CD8-positive, alpha-beta T cell (primary cell): ENCODE measurements at regions of chr14 and their contacts with region 1.

Region 1: GRCh38 chr14:87992718-87993628 is at the start of gene GALC:
- DNase-seq: peak; percentile 91 to 98 (median 95)
- ATAC-seq: peak; percentile 81
- H3K4me3 ChIP-seq: peak within 1 kb of the TSS; percentile 59 to 72
- H3K4me3 Mint-ChIP-seq: peak within 1 kb of the TSS; percentile 90
- H3K27ac ChIP-seq: peak within 1 kb of the TSS; percentile 83 to 96
- H3K27ac Mint-ChIP-seq: peak within 1 kb of the TSS; percentile 98
- H3K4me1 ChIP-seq: peaks cover 42% of the 10 kb centered on the region
- H3K4me1 Mint-ChIP-seq: peaks cover 73% of the 10 kb centered on the region
- H3K27me3 ChIP-seq: no peaks in the 10 kb centered on the region
- H3K27me3 Mint-ChIP-seq: no peaks in the 10 kb centered on the region
- CTCF ChIP-seq: peak; percentile 6
- total RNA-seq, gene GALC: 14.9 to 16.3 TPM

Region 2: DNA sequence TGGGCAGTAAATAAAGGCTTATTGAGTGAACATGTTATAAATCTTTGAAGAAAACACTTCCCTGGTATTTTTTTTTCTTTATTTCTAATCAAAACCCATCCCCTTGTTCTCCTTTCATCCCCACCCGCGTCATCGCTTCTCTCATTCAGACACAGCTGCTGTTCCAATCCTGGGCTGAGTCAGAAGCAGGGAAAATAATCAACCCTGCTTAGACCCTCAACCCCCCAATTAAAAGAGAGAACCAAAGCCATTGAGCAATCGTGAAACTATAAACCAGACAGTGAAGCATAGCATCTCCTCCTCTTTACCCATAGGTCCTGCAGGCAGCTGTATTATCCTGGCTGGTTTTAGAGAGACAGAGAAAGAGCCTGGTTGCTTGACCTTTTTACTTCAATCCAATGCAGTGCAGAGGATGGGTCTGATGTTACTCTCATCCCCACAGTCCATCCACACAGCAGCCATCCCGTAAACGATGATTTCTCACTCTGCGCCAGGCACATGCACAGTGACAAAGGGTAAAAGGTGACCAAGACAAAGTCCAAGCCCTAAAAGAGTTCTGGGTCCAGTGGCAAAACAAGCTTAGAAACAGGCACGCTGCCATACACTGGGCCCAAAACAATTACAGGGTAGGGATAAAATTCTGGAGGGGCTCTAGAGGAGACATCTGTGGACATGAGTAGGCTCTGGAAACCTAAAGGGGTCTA is 238.3 kb before region 1 on chr14:
- CTCF ChIA-PET with region 1: no interaction called
- POLR2A ChIA-PET with region 1: no interaction called
- intact Hi-C with region 1: no loop called
- DNase-seq: no peak
- ATAC-seq: no peak
- H3K4me3 ChIP-seq: no peak overlapping the region
- H3K4me3 Mint-ChIP-seq: no peak overlapping the region
- H3K27ac ChIP-seq: no peak overlapping the region
- H3K27ac Mint-ChIP-seq: no peak overlapping the region
- H3K4me1 ChIP-seq: no peaks in the 10 kb centered on the region
- H3K4me1 Mint-ChIP-seq: no peaks in the 10 kb centered on the region
- H3K27me3 ChIP-seq: no peaks in the 10 kb centered on the region
- H3K27me3 Mint-ChIP-seq: peaks cover 7% of the 10 kb centered on the region
- CTCF ChIP-seq: no peak

Region 3: DNA sequence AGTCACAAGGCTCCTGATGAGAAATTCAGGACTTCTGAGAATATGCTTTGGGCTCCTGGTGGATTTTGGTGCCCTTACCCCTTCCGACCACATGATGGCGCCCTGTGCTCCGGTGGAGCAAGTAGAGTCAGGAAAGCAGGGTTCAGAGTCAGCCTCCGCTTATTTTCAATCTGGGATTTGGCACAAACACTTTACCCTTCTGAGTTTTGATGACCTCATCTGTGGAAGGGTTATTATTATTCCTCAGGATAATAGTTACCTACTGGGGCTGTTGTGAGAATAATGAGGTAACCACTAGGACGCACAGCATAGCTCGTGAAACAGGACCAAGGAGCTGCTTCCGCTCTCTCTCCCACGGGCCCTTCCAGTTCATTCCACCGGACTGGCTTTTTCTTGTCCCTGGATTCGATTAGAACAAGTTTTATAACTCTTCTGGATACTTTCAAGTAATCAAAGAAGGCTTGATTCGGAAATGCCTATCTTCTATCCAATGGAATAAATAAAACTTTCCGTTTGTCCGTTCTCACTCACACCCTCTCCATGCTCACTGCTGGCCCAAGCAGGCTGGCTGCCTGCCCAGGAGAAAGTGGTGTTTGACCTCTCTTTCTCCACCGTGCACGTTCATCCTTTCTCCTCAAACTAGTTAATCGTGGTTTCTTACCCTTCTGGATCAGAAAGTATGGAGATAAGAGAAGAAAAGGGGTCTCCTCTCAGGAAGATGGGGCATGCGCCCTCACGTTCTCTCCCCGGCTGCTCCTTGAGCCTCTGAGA is 104.6 kb before region 1 on chr14:
- CTCF ChIA-PET with region 1: no interaction called
- POLR2A ChIA-PET with region 1: no interaction called
- intact Hi-C with region 1: no loop called
- DNase-seq: peak in 2 of 9 experiments; percentile 9 to 14
- ATAC-seq: no peak
- H3K4me3 ChIP-seq: no peak overlapping the region
- H3K4me3 Mint-ChIP-seq: no peak overlapping the region
- H3K27ac ChIP-seq: no peak overlapping the region
- H3K27ac Mint-ChIP-seq: no peak overlapping the region
- H3K4me1 ChIP-seq: no peaks in the 10 kb centered on the region
- H3K4me1 Mint-ChIP-seq: no peaks in the 10 kb centered on the region
- H3K27me3 ChIP-seq: no peaks in the 10 kb centered on the region
- H3K27me3 Mint-ChIP-seq: peaks cover 7% of the 10 kb centered on the region
- CTCF ChIP-seq: no peak

Region 4: GRCh38 chr14:87952307-87953094 is 40.5 kb before region 1 on chr14:
- CTCF ChIA-PET with region 1: interaction called, 4 read pairs
- POLR2A ChIA-PET with region 1: interaction called, 7 read pairs
- intact Hi-C with region 1: loop called in 1 of 2 experiments (anchors 5 kb)
- DNase-seq: peak in 2 of 9 experiments; percentile 40 to 63
- ATAC-seq: peak; percentile 54
- H3K4me3 ChIP-seq: peak overlapping the region in 1 of 2 experiments; percentile 9
- H3K4me3 Mint-ChIP-seq: peak overlapping the region; percentile 69
- H3K27ac ChIP-seq: peak overlapping the region; percentile 49 to 73
- H3K27ac Mint-ChIP-seq: peak overlapping the region; percentile 91
- H3K4me1 ChIP-seq: peaks cover 30% of the 10 kb centered on the region
- H3K4me1 Mint-ChIP-seq: peaks cover 54% of the 10 kb centered on the region
- H3K27me3 ChIP-seq: no peaks in the 10 kb centered on the region
- H3K27me3 Mint-ChIP-seq: no peaks in the 10 kb centered on the region
- CTCF ChIP-seq: no peak

Region 5: DNA sequence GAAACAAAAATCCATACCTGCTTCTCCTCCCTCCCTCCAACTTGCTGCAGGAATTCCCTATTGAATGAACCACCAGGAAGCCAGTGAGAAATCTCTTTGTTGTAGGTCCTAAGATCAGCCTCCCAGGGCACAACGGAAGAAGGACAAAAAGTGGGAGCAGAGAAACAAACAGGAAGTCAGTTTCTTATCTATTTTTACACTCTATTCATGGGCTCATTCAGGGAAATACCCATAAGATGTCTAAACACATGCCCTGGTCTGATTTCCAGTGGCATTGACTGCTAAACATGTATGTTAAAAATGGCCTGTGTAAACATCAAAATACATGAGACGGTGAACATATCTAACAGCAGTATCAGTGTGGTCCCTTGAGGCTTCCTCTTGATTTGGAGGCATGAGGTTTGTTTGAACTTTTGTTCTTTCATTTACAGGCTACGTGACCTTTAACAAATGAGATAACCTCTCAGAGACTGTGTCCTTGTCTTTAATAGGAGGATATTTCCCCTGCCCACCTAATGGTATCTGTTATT is 30.8 kb after region 1 on chr14:
- CTCF ChIA-PET with region 1: interaction called, 4 read pairs
- POLR2A ChIA-PET with region 1: interaction called, 10 read pairs
- intact Hi-C with region 1: loop called in 1 of 2 experiments (anchors 2 kb)
- DNase-seq: peak in 2 of 9 experiments; percentile 37 to 61
- ATAC-seq: peak; percentile 64
- H3K4me3 ChIP-seq: no peak overlapping the region
- H3K4me3 Mint-ChIP-seq: peak overlapping the region; percentile 42
- H3K27ac ChIP-seq: peak overlapping the region in 1 of 2 experiments; percentile 55
- H3K27ac Mint-ChIP-seq: peak overlapping the region; percentile 79
- H3K4me1 ChIP-seq: peaks cover 60% of the 10 kb centered on the region
- H3K4me1 Mint-ChIP-seq: peaks cover 87% of the 10 kb centered on the region
- H3K27me3 ChIP-seq: no peaks in the 10 kb centered on the region
- H3K27me3 Mint-ChIP-seq: no peaks in the 10 kb centered on the region
- CTCF ChIP-seq: no peak

Region 6: GRCh38 chr14:88044851-88045339 is 51.9 kb after region 1 on chr14:
- CTCF ChIA-PET with region 1: no interaction called
- POLR2A ChIA-PET with region 1: no interaction called
- intact Hi-C with region 1: no loop called
- DNase-seq: no peak
- ATAC-seq: peak; percentile 44
- H3K4me3 ChIP-seq: no peak overlapping the region
- H3K4me3 Mint-ChIP-seq: no peak overlapping the region
- H3K27ac ChIP-seq: no peak overlapping the region
- H3K27ac Mint-ChIP-seq: peak overlapping the region; percentile 27
- H3K4me1 ChIP-seq: peaks cover 3% of the 10 kb centered on the region
- H3K4me1 Mint-ChIP-seq: peaks cover under 1% of the 10 kb centered on the region
- H3K27me3 ChIP-seq: no peaks in the 10 kb centered on the region
- H3K27me3 Mint-ChIP-seq: no peaks in the 10 kb centered on the region
- CTCF ChIP-seq: no peak

Region 7: DNA sequence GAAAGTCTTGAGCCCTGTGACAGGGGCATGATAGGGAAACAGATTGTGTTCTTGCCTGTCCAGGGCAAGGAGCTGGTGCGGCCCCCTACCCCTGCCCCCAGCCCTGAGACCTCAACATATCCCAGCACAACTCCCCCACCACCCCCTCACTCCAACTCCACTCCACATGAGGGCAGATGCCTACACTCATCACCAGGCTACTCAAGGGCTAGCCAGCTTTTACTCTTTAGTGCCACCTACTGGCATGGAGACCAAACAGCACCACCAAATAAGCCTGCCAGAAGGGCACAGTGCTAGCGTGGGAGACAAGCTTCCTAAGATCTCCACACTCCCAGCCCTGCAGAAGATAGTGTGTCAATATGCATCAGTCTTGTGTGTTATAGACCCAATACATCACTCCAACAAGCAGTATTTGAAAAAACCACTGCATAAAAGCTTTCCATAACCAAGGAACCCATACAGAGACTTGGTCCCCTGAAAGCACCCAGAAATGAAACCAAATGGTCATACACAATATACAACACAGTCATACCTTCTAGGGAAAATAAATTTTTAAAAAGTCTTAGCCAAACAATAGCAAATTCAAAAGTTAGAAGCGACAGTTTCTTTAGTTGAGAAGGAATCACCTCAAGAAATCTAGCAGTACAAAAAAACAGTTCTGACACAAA is 175.7 kb after region 1 on chr14:
- CTCF ChIA-PET with region 1: interaction called, 14 read pairs
- POLR2A ChIA-PET with region 1: no interaction called
- intact Hi-C with region 1: no loop called
- DNase-seq: peak; percentile 24 to 77 (median 55)
- ATAC-seq: peak; percentile 96
- H3K4me3 ChIP-seq: no peak overlapping the region
- H3K4me3 Mint-ChIP-seq: peak overlapping the region; percentile 58
- H3K27ac ChIP-seq: no peak overlapping the region
- H3K27ac Mint-ChIP-seq: no peak overlapping the region
- H3K4me1 ChIP-seq: no peaks in the 10 kb centered on the region
- H3K4me1 Mint-ChIP-seq: peaks cover 16% of the 10 kb centered on the region
- H3K27me3 ChIP-seq: no peaks in the 10 kb centered on the region
- H3K27me3 Mint-ChIP-seq: peaks cover 19% of the 10 kb centered on the region
- CTCF ChIP-seq: peak; percentile 70

Region 8: DNA sequence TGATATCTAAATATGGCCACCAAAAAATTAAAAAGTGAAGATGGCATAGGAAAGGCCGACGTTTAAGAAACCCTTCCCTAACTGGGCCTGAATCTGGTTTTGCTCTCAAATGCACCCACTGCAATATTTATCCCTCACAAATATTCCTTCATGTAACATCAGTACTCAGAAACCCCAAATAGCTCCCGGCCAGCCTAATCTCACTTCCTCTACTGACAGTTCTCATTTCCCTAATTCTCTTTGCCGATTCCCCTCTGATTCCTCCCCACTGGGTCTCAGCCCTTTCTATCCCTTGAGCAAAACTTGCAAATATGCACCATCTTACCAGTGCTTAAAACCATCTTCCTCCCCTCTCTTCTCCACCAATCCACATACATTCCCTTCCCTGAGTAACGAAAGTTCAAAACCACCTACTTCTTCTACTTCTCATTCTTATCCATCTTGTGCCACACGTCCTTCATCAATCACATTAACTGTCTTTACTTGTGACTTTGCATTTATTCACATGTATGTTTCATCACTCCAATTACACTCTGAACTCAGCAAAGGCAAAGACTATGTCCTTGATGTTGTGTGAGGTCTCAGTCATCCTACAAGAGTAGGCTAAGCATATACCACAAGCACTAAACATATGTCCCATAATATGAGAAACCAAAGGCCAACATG is 307.0 kb after region 1 on chr14:
- CTCF ChIA-PET with region 1: no interaction called
- POLR2A ChIA-PET with region 1: no interaction called
- intact Hi-C with region 1: no loop called
- DNase-seq: no peak
- ATAC-seq: no peak
- H3K4me3 ChIP-seq: no peak overlapping the region
- H3K4me3 Mint-ChIP-seq: no peak overlapping the region
- H3K27ac ChIP-seq: no peak overlapping the region
- H3K27ac Mint-ChIP-seq: no peak overlapping the region
- H3K4me1 ChIP-seq: no peaks in the 10 kb centered on the region
- H3K4me1 Mint-ChIP-seq: peaks cover 3% of the 10 kb centered on the region
- H3K27me3 ChIP-seq: peaks cover 0 to 6% of the 10 kb centered on the region in 2 experiments
- H3K27me3 Mint-ChIP-seq: peaks cover 39% of the 10 kb centered on the region
- CTCF ChIP-seq: no peak

Region 9: DNA sequence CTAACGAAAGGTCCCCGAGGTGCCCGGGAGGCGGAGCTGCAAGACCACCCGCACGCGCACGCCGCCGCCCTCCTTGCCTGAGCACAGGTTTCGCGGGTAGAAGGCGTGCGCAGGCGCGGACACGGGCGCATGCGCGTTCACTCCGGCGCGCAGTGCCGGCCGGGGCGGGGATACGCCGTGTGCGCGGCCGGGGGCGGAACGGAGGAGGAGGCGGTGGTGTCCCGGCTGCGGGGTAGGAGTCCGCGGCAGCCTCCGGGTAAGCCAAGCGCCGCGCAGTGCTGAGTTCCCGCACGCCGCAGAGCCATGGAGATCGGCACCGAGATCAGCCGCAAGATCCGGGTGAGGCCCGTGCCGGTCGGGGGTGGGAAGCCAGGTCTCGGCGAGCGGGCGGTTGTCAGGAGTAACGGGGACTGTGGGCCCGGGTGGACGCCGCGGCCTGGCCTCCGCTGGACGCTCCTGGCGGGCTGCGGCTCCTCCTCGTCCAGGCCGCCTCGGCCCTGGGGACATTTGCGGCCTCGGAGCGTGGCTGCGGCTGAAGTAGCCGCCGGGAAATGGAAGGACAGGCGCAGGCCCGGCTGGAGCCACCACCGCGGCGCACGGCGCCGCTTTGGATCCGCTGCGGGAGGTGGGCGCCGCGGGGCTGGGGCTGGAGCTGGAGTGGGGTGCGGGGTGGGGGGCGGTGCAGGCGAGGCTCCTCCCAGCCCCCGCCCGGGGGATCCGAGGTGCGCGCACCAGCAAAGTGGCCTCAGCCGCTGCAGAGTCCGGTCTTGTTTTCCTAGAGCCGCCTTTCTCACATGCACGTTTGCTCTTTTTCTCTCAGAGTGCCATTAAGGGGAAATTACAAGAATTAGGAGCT is 570.1 kb after region 1 on chr14 and contains the start of gene ZC3H14:
- CTCF ChIA-PET with region 1: no interaction called
- POLR2A ChIA-PET with region 1: no interaction called
- intact Hi-C with region 1: loop called (anchors 10 kb)
- DNase-seq: peak; percentile 69 to 94 (median 86)
- ATAC-seq: peak; percentile 95
- H3K4me3 ChIP-seq: peak within 1 kb of the TSS; percentile 75 to 91
- H3K4me3 Mint-ChIP-seq: peak within 1 kb of the TSS; percentile 96
- H3K27ac ChIP-seq: peak within 1 kb of the TSS; percentile 52 to 66
- H3K27ac Mint-ChIP-seq: peak within 1 kb of the TSS; percentile 91
- H3K4me1 ChIP-seq: peaks cover 20% of the 10 kb centered on the region
- H3K4me1 Mint-ChIP-seq: peaks cover 35% of the 10 kb centered on the region
- H3K27me3 ChIP-seq: no peaks in the 10 kb centered on the region
- H3K27me3 Mint-ChIP-seq: peaks cover 7% of the 10 kb centered on the region
- CTCF ChIP-seq: no peak
- total RNA-seq, gene ZC3H14: 36.3 to 39.3 TPM